Calu3 (cell line): ENCODE measurements at regions of chr1 and their contacts with region 1.

Region 1: GRCh38 chr1:204363335-204364124 is 3.8 kb upstream of the PLEKHA6 start:
- DNase-seq: peak; percentile 73
- H3K4me3 Mint-ChIP-seq: peak overlapping the region; percentile 44
- H3K27ac Mint-ChIP-seq: peak overlapping the region; percentile 8
- H3K4me1 Mint-ChIP-seq: peaks cover 34% of the 10 kb centered on the region
- H3K27me3 Mint-ChIP-seq: no peaks in the 10 kb centered on the region
- CTCF ChIP-seq: peak; percentile 98

Region 2: DNA sequence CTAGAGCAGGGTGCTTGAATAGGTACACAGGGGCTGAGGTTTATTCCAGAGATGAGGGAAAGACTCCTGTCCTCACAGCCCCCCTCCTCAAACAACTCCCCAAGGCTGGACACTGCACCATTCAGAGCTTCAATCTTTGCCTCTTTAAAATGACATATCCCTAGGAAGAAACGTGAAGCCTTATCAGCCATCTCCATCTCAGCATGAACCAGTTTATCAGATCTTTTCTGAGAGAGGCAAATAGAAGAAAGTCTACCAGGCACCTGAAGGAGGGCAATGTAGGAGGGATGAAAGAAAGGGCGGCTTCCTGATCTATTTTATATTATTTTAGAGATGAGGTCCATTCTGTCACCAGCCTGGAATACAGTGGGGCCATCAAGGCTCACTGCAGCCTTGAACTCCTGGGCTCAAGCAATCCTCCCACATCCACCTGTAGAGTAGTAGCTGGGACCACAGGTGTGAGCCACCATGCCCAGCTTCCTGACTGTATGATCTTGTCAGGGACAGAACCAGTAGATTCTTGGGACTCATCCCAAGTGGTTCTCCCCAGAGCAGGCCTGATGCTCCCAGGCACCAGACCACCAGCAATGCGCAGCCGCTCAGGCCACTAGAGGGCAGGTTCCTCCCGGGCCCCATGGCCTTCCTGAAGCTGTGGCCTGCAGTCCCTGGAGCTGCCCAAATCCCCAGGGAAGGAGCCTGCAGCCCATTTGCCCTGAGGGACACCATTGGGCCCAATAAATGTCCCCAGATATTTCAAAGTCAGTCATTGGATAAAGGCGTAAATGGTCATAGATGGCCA is 105.4 kb before region 1 on chr1:
- CTCF ChIA-PET with region 1: interaction called, 39 read pairs
- intact Hi-C with region 1: loop called (anchors 1 kb)
- DNase-seq: peak; percentile 80
- H3K4me3 Mint-ChIP-seq: no peak overlapping the region
- H3K27ac Mint-ChIP-seq: no peak overlapping the region
- H3K4me1 Mint-ChIP-seq: no peaks in the 10 kb centered on the region
- H3K27me3 Mint-ChIP-seq: no peaks in the 10 kb centered on the region
- CTCF ChIP-seq: peak; percentile 80

Region 3: GRCh38 chr1:204350857-204351573 is 12.5 kb before region 1 on chr1:
- CTCF ChIA-PET with region 1: no interaction called
- intact Hi-C with region 1: no loop called
- DNase-seq: no peak
- H3K4me3 Mint-ChIP-seq: no peak overlapping the region
- H3K27ac Mint-ChIP-seq: no peak overlapping the region
- H3K4me1 Mint-ChIP-seq: peaks cover 13% of the 10 kb centered on the region
- H3K27me3 Mint-ChIP-seq: no peaks in the 10 kb centered on the region
- CTCF ChIP-seq: no peak